ENCODE measurements at regions of chr1 and their contacts with region 1.

Region 1: GRCh38 chr1:227961651-227962225 is 14.0 kb upstream of the WNT9A start:
- DNase-seq: no peak
- H3K4me3 ChIP-seq: no peak overlapping the region
- H3K27ac ChIP-seq: no peak overlapping the region
- H3K4me1 ChIP-seq: peaks cover 0 to 5% (median 0%) of the 10 kb centered on the region in 4 donors
- H3K27me3 ChIP-seq: peaks cover 17% of the 10 kb centered on the region
- CTCF ChIP-seq: no peak
- EP300 ChIP-seq: no peak
- POLR2A ChIP-seq: no peak

Region 2: DNA sequence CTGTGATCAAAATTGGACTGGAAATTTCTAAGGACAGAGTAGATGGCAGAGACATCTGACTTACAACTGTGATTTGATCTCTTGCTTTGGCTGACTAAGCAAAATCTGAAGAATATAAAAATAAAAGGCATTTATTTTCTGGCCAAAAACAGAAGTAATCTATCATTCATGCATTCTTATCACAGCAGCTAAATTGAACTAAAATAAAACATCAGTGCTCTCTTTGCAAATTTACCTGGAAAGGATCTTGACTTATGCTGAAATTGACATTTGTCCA is 479.8 kb before region 1 on chr1:
- in situ Hi-C with region 1: loop called in 3 of 4 experiments (anchors 5 to 10 kb)
- intact Hi-C with region 1: loop called (anchors 10 kb)
- DNase-seq: no peak
- H3K4me3 ChIP-seq: no peak overlapping the region
- H3K27ac ChIP-seq: no peak overlapping the region
- H3K4me1 ChIP-seq: no peaks in the 10 kb centered on the region
- H3K27me3 ChIP-seq: peaks cover 12% of the 10 kb centered on the region
- CTCF ChIP-seq: no peak
- EP300 ChIP-seq: no peak
- POLR2A ChIP-seq: no peak

Region 3: GRCh38 chr1:227762233-227762911 is 199.4 kb before region 1 on chr1:
- in situ Hi-C with region 1: loop called in 2 of 4 experiments (anchors 5 to 10 kb)
- intact Hi-C with region 1: no loop called
- DNase-seq: peak; percentile 90
- H3K4me3 ChIP-seq: no peak overlapping the region
- H3K27ac ChIP-seq: peak overlapping the region in 3 of 4 donors; percentile 53 to 80 (median 62)
- H3K4me1 ChIP-seq: peaks cover 13 to 30% (median 25%) of the 10 kb centered on the region in 4 donors
- H3K27me3 ChIP-seq: no peaks in the 10 kb centered on the region
- CTCF ChIP-seq: peak; percentile 85 to 89 (median 87)
- EP300 ChIP-seq: no peak
- POLR2A ChIP-seq: no peak

Region 4: DNA sequence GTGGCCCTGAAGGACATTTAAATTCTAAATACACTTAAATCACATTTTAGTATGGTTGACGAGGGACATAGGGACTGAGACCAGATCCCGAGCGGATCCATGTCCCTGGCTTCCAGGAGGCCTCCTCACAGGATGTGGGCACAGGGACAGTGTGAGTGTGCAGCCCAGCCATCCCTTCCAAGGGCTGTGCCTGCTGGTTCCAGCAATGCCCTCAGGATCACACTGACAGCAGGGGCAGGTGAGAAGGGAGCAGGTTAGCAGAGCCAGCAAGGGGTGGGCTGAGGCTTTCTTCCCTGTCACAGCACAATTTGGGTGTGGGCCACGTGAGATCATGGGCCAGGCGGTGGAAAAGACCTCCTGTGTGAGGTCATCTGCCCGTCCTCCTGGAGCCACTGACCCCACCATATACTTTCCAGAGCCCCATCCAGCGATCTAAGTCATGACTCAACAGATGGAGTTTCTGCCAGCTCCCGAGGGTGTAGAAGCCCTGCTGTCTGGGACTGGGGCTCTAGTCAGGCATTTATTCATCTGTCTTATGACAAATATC is 183.3 kb before region 1 on chr1:
- in situ Hi-C with region 1: no loop called
- intact Hi-C with region 1: no loop called
- DNase-seq: no peak
- H3K4me3 ChIP-seq: no peak overlapping the region
- H3K27ac ChIP-seq: no peak overlapping the region
- H3K4me1 ChIP-seq: peaks cover 0 to 4% (median 0%) of the 10 kb centered on the region in 4 donors
- H3K27me3 ChIP-seq: no peaks in the 10 kb centered on the region
- CTCF ChIP-seq: no peak
- EP300 ChIP-seq: no peak
- POLR2A ChIP-seq: no peak

Measured in transverse colon (tissue), 4 donors.